ENCODE measurements at regions of chr2 and their contacts with region 1.

Region 1: GRCh38 chr2:98412751-98413458 is 31.8 kb upstream of the INPP4A start:
- DNase-seq: no peak
- ATAC-seq: peak; percentile 44 to 73 (median 67)
- H3K4me3 ChIP-seq: no peak overlapping the region
- H3K27ac ChIP-seq: no peak overlapping the region
- H3K4me1 ChIP-seq: no peaks in the 10 kb centered on the region
- H3K27me3 ChIP-seq: no peaks in the 10 kb centered on the region
- CTCF ChIP-seq: peak; percentile 59

Region 2: DNA sequence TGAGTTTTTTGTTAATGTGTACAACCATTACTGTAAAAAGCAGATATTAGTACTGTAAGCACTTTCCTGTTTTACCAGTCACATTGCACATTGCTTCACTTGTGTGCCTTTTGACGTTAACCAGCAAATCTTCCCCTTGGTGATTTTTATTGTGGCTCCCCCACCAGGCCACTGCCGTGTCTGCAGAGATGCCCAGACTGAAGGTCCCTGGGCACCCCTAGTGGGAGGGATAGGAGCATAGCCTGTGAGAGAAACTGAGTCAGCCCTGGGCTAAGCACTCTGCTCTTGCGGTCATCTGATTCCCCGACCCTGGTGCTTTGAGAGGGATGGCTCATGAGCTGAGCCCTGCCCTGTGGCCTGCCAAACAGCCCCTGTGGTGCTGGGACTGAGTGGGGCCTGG is 105.2 kb after region 1 on chr2:
- intact Hi-C with region 1: loop called in 1 of 2 experiments (anchors 10 kb)
- DNase-seq: no peak
- ATAC-seq: peak in 1 of 4 donors; percentile 53
- H3K4me3 ChIP-seq: no peak overlapping the region
- H3K27ac ChIP-seq: no peak overlapping the region
- H3K4me1 ChIP-seq: no peaks in the 10 kb centered on the region
- H3K27me3 ChIP-seq: no peaks in the 10 kb centered on the region
- CTCF ChIP-seq: peak; percentile 9

Region 3: GRCh38 chr2:98601532-98602132 is 188.7 kb after region 1 on chr2:
- intact Hi-C with region 1: loop called (anchors 5 to 10 kb)
- DNase-seq: peak in 1 of 2 donors; percentile 39
- ATAC-seq: peak; percentile 76 to 84 (median 77)
- H3K4me3 ChIP-seq: no peak overlapping the region
- H3K27ac ChIP-seq: no peak overlapping the region
- H3K4me1 ChIP-seq: peaks cover 15% of the 10 kb centered on the region
- H3K27me3 ChIP-seq: no peaks in the 10 kb centered on the region
- CTCF ChIP-seq: peak; percentile 54

Region 4: DNA sequence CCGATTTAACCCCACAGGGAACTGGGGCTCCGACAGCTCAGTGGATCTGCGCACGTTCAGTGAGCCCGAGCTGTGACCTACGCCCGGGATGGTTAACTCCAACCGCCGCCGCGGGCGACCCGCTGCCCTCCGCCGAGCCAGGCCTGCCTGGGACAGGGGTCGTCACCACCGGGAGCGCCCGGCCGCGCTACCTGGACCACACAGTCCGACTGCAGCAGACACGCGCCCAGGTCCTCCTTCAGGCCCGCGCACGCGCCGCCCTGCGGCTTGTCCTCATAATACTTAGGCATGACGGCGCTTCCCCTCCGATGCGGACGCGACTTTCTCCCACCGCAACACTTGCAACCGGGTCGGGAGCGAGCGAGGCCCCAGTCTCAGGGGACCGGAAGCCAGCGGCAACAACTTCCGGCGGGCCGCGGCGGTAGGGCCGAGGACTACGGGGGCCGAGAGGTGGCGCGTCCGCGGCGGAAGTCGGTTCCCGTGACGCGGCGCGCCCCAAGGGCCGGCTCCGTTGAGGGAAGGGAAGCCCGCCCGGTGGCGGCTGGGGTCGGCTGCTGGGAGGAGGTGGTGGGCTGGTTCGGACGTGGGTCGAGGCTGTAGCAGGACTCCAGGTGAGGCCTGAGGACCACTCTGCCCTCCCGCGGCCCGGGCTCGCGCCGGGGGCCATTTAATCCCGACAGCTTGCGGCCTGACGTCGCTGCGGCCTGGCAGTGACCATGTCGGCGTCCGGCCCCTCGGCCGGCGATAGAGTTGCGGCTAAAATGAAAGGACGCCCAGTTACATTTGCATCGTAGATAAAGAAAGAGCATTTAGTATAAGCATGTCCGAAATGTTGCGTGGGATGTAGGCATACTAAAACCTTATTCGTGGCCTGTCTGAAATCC is 195.5 kb after region 1 on chr2 and contains the starts of genes COA5 and UNC50:
- intact Hi-C with region 1: loop called (anchors 5 to 10 kb)
- DNase-seq: peak; percentile 93 to 95
- ATAC-seq: peak; percentile 97 to 98 (median 98)
- H3K4me3 ChIP-seq: peak within 1 kb of the TSS; percentile 98
- H3K27ac ChIP-seq: peak within 1 kb of the TSS; percentile 99
- H3K4me1 ChIP-seq: peaks cover 49% of the 10 kb centered on the region
- H3K27me3 ChIP-seq: no peaks in the 10 kb centered on the region
- CTCF ChIP-seq: no peak
- total RNA-seq, gene COA5: 22.5 to 37.5 (median 29.2) TPM
- total RNA-seq, gene UNC50: 19.9 to 35.1 (median 22.4) TPM

Region 5: DNA sequence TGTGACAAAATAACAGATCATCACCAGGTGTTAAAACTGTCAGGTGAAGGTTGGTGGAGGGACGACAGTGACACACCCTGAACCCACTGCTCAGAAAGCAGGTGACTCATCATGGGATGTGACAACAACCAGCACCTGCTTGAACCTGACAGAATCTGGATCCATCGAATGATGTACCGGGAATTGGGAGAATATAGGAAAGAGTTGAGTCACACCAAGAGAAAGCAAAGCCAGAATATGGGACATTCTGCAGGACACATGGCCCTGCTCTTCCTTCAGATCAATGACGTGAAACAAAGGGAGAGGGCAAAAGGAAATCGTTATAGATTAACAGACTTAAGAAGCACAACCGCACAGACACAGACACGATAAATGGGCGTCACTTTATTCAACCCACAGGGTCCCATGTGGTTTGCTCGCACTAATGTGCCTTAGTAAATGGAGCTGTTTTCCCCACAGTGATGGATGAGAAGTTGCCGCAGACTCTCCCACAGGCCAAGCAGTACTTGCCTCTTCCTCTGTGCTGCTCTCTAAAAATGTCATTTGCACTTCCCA is 423.0 kb after region 1 on chr2:
- intact Hi-C with region 1: loop called in 1 of 2 experiments (anchors 10 kb)
- DNase-seq: no peak
- ATAC-seq: no peak
- H3K4me3 ChIP-seq: no peak overlapping the region
- H3K27ac ChIP-seq: no peak overlapping the region
- H3K4me1 ChIP-seq: no peaks in the 10 kb centered on the region
- H3K27me3 ChIP-seq: no peaks in the 10 kb centered on the region
- CTCF ChIP-seq: no peak